ENCODE measurements at regions of chr1 and their contacts with region 1.

Region 1: GRCh38 chr1:37519613-37520012 is 5.0 kb upstream of the MEAF6 start:
- DNase-seq: no peak
- ATAC-seq: peak; percentile 23
- H3K4me3 Mint-ChIP-seq: peak overlapping the region; percentile 89
- H3K27ac Mint-ChIP-seq: peak overlapping the region; percentile 96
- H3K4me1 Mint-ChIP-seq: peaks cover 22% of the 10 kb centered on the region
- H3K27me3 Mint-ChIP-seq: no peaks in the 10 kb centered on the region

Region 2: DNA sequence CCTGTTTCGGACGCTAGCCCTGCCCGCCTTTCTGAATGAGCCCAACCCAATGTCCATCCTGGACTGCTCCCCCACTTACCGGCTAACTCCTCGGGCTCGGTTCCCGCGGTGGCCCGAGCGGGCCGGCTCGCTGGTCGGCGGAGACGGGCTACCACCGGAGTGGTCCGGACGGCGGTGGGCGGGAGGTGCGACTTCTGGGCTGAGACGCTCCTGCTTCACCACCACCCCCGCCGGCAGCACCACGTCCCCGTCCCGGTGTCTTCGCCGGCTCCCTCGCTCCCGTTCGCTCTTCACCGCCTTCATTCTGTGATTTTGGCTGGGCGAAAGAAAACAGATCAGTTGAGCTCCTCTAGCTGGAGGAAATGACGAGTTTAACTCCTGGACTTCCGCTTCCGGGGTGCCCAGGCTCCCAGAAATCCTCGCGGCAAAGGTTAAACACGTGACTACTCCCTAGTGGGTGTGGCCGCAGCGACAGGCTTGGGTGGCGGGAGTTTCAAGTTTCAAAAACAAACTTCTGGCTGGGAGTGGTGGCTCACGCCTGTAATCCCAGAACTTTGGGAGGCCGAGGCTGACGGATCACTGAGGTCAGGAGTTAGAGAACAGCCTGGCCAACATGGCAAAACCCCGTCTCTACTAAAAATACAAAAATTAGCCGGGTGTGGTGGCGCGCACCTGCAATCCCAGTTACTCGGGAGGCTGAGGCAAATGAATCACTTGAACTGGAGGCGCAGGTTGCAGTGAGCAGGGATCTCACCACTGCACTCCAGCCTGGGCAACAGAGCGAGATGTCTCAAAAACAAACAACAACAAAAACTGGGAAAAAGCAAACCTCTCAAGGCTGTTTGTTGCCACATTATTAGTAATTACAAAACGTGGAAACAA is 34.6 kb after region 1 on chr1 and contains the start of gene SNIP1:
- POLR2A ChIA-PET with region 1: interaction called, 12 read pairs
- DNase-seq: peak; percentile 86
- ATAC-seq: peak; percentile 88
- H3K4me3 Mint-ChIP-seq: peak within 1 kb of the TSS; percentile 99
- H3K27ac Mint-ChIP-seq: peak within 1 kb of the TSS; percentile 100
- H3K4me1 Mint-ChIP-seq: peaks cover 29% of the 10 kb centered on the region
- H3K27me3 Mint-ChIP-seq: no peaks in the 10 kb centered on the region
- total RNA-seq, gene SNIP1: 29.3 to 32.3 TPM

Region 3: GRCh38 chr1:37602750-37603694 is 83.4 kb after region 1 on chr1:
- POLR2A ChIA-PET with region 1: no interaction called
- DNase-seq: no peak
- ATAC-seq: no peak
- H3K4me3 Mint-ChIP-seq: no peak overlapping the region
- H3K27ac Mint-ChIP-seq: no peak overlapping the region
- H3K4me1 Mint-ChIP-seq: no peaks in the 10 kb centered on the region
- H3K27me3 Mint-ChIP-seq: peaks cover 27% of the 10 kb centered on the region

Measured in activated naive CD8-positive, alpha-beta T cell treated with anti-CD3 and anti-CD28 coated beads, Interleukin-2, amount 10 ng/mL, durations not matched to agents 7 days and 5 days (primary cell).